GM12878 (cell line): ENCODE measurements at regions of chr15 and their contacts with region 1.

Region 1: DNA sequence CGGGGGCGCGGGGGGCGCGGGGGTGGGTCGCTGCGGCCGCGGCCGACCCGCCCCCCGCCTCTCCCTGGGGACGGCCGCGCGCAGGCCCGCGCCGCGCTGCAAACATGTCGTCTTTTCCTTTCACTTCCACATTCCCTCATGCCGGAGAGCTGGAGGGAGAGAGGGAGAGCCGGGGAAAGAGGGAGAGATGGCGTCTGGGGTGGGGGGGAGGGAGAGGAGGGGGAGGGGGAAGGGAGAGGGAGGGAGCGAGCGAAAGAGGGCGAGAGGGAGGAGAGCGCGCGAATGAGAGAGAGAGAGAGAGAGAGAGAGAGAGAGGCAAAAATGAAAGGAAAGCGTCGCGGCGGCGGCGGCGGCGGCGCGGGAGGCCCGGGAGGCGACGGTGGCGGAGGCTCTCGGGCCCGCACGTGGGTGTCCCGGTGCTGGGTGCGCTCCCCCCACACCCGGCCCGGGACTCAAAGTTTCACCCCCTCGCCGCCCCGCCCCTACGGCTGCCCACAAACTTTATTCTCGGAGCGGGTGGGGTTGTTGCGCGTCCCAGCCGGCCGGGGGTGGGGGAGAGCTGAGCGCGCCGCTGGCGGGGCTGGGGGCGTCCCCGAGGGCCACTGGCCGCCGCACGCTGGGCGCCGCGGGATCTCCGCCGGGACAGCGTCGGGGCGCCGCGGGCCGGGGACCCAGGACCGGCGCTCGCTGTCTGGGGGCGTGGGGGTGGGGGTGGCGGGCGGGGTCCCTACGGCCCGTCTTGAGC is 731 bp downstream of the ZNF710 start:
- DNase-seq: no peak
- ATAC-seq: peak; percentile 40
- H3K4me3 ChIP-seq: peak overlapping the region; percentile 79
- H3K27ac ChIP-seq: peak overlapping the region; percentile 85
- H3K4me1 ChIP-seq: peaks cover 25% of the 10 kb centered on the region
- H3K27me3 ChIP-seq: no peaks in the 10 kb centered on the region
- CTCF ChIP-seq: no peak
- EP300 ChIP-seq: no peak
- POLR2A ChIP-seq: peak; percentile 59
- RAD21 ChIP-seq: no peak

Region 2: DNA sequence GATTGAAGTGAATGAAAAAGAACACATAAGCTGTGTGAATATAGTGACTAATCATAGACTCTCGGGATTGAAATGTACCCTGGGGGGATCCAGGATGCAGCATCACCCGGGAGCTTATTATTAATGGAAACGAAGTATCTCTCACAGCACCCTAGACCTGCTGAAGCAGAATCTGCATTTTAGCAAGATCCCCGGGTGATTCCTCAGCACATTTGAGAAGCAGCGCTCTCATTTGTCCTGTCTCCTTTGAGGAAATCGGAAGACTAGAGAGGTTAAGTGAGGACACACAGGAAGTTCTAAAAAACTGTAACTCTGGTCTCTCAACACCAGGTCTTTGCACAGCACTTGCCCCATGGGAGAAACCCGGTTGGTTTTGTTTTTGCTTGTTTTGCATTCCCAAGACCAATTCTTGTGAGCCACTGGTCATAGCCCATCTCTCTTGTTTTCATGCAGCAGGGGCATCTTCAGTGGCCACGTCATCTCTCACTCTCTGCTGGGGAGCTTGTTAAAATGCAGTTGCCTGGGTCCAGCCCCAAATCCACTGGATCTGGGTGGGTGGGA is 29.5 kb after region 1 on chr15:
- CTCF ChIA-PET with region 1: interaction called, 15 read pairs
- POLR2A ChIA-PET with region 1: interaction called, 56 read pairs
- RAD21 ChIA-PET with region 1: interaction called, 39 read pairs
- SMC1A ChIA-PET with region 1: interaction called, 224 read pairs
- in situ Hi-C with region 1: no loop called
- intact Hi-C with region 1: no loop called
- DNase-seq: peak; percentile 95
- ATAC-seq: peak; percentile 92
- H3K4me3 ChIP-seq: peak overlapping the region; percentile 12; the same call in 1 of the 2 replicates
- H3K27ac ChIP-seq: peak overlapping the region; percentile 75
- H3K4me1 ChIP-seq: peaks cover 41% of the 10 kb centered on the region
- H3K27me3 ChIP-seq: no peaks in the 10 kb centered on the region
- CTCF ChIP-seq: no peak
- EP300 ChIP-seq: peak; percentile 60 to 83; a peak in 3 of 4 replicates
- POLR2A ChIP-seq: 0 out of 2 replicates have a peak, but pooled peaks have one; percentile 17
- RAD21 ChIP-seq: 0 out of 2 replicates have a peak, but pooled peaks have one; percentile 6

Region 3: GRCh38 chr15:90046911-90047392 is 45.1 kb after region 1 on chr15:
- CTCF ChIA-PET with region 1: no interaction called
- POLR2A ChIA-PET with region 1: no interaction called
- RAD21 ChIA-PET with region 1: no interaction called
- SMC1A ChIA-PET with region 1: interaction called, 12 read pairs
- in situ Hi-C with region 1: no loop called
- intact Hi-C with region 1: no loop called
- DNase-seq: no peak
- ATAC-seq: peak; percentile 80
- H3K4me3 ChIP-seq: no peak overlapping the region
- H3K27ac ChIP-seq: peak overlapping the region; percentile 75
- H3K4me1 ChIP-seq: peaks cover 17% of the 10 kb centered on the region
- H3K27me3 ChIP-seq: no peaks in the 10 kb centered on the region
- CTCF ChIP-seq: no peak
- EP300 ChIP-seq: no peak
- POLR2A ChIP-seq: 0 out of 2 replicates have a peak, but pooled peaks have one; percentile 16
- RAD21 ChIP-seq: no peak

Region 4: GRCh38 chr15:90071208-90071807 is 69.5 kb after region 1 on chr15:
- CTCF ChIA-PET with region 1: interaction called, 8 read pairs
- POLR2A ChIA-PET with region 1: interaction called, 4 read pairs
- RAD21 ChIA-PET with region 1: interaction called, 12 read pairs
- SMC1A ChIA-PET with region 1: interaction called, 12 read pairs
- in situ Hi-C with region 1: no loop called
- intact Hi-C with region 1: loop called (anchors 2 kb)
- DNase-seq: peak; percentile 54
- ATAC-seq: peak; percentile 98
- H3K4me3 ChIP-seq: no peak overlapping the region
- H3K27ac ChIP-seq: no peak overlapping the region
- H3K4me1 ChIP-seq: no peaks in the 10 kb centered on the region
- H3K27me3 ChIP-seq: no peaks in the 10 kb centered on the region
- CTCF ChIP-seq: peak; percentile 79 to 89 (median 81)
- EP300 ChIP-seq: no peak
- POLR2A ChIP-seq: no peak
- RAD21 ChIP-seq: peak; percentile 95